Posterior vena cava (tissue), 2 donors: ENCODE measurements at regions of chr2 and their contacts with region 1.

Region 1: DNA sequence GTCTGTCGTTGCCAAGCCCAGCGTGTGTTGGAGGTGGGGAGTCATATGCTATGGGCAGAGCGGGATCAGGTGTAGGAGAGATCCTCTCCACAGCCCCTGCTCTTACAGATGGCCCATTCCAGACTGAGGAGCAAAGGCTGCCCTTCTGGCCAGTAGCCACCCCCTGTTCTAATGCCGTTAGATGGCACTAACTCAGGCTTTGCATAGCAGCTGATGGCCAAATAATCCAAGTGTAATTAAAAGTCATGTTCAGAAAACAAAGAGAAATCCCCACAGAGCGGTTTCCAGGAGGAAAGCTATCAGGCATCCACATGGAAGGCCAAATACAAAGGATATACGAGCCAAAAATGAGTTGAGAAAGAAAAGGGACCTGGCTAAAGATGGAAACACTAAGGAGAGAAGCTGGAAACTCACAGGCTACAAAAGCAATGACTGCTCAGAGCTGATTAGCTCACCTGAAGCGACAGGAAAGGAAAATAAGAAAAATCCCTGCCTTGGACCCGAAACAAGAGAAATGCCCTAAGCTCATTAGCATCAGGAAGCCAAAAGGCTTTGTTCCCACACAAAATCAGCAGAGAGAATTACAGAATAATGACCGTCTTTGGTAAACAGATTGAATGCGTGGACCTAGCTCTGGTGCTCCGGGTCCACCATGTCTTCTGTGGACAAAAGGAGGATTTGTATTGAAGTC is 1002.4 kb upstream of the KLHL29 start:
- DNase-seq: no peak

Region 2: GRCh38 chr2:22406625-22407024 is 24.0 kb after region 1 on chr2:
- intact Hi-C with region 1: no loop called
- DNase-seq: no peak

Region 3: DNA sequence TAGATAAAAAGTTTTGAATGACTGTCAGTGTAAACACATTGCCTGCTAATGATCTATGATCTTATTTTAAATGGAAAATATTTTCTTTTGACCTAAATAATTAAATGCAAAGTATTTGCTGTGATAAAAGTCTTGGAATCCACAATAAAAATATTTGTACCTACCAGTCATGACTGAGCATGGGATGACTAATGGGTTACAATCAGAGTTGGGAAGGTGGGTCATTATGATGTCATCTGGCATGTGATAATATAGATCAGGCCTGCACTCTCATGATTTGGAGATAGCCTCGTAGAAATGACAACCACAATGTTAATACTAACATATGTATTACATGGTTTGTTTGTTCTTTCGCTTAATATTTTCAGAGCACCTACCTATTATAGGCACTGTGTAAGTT is 153.5 kb after region 1 on chr2:
- intact Hi-C with region 1: loop called in 1 of 2 experiments (anchors 5 kb)
- DNase-seq: no peak